Activated naive CD4-positive, alpha-beta T cell treated with anti-CD3 and anti-CD28 coated beads for 36 hours (primary cell): ENCODE measurements at regions of chr9 and their contacts with region 1.

Region 1: DNA sequence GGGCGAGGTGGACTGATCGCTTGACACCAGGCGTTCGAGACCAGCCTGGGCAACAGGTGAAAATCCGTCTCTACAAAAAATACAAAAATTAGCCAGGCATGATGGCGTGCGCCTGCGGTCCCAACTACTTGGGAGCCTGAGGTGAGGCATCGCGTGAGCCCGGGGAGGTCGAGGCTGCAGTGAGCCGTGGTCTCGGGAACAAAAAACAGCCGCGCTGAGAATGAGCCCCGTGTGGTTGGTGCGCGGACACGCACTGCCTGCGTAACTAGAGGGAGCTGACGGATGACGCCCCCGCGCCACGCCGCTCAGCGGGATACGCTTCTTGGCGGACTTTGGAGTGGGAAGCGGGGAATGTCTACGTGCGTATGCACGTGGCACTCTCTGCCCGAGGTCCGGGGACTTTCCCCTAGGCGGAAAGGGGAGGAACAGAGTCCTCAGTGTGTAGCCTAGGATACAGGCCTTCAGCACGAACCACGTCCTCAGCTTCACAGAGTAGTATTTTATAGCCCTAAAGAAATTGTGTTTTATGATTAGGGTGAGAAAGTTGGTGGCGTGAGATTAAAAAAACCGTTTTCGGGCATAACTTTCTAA is at the start of gene RMRP:
- DNase-seq: peak; percentile 93
- H3K4me3 Mint-ChIP-seq: peak within 1 kb of the TSS; percentile 84
- H3K27ac Mint-ChIP-seq: peak within 1 kb of the TSS; percentile 94
- H3K4me1 Mint-ChIP-seq: peaks cover 60% of the 10 kb centered on the region
- H3K27me3 Mint-ChIP-seq: peaks cover 3% of the 10 kb centered on the region
- total RNA-seq, gene RMRP: 7,381 to 12,571 TPM

Region 2: GRCh38 chr9:34376596-34377403 is 1280.8 kb before region 1 on chr9 and contains the start of gene MYORG:
- CTCF ChIA-PET with region 1: no interaction called
- intact Hi-C with region 1: no loop called
- DNase-seq: peak; percentile 97
- H3K4me3 Mint-ChIP-seq: peak within 1 kb of the TSS; percentile 80
- H3K27ac Mint-ChIP-seq: no peak within 1 kb of the TSS
- H3K4me1 Mint-ChIP-seq: peaks cover 30% of the 10 kb centered on the region
- H3K27me3 Mint-ChIP-seq: no peaks in the 10 kb centered on the region
- total RNA-seq, gene MYORG: 1.1 to 2.0 TPM

Region 3: GRCh38 chr9:34759432-34760134 is 898.1 kb before region 1 on chr9:
- CTCF ChIA-PET with region 1: no interaction called
- intact Hi-C with region 1: no loop called
- DNase-seq: no peak
- H3K4me3 Mint-ChIP-seq: no peak overlapping the region
- H3K27ac Mint-ChIP-seq: no peak overlapping the region
- H3K4me1 Mint-ChIP-seq: peaks cover 2% of the 10 kb centered on the region
- H3K27me3 Mint-ChIP-seq: peaks cover 32% of the 10 kb centered on the region

Region 4: DNA sequence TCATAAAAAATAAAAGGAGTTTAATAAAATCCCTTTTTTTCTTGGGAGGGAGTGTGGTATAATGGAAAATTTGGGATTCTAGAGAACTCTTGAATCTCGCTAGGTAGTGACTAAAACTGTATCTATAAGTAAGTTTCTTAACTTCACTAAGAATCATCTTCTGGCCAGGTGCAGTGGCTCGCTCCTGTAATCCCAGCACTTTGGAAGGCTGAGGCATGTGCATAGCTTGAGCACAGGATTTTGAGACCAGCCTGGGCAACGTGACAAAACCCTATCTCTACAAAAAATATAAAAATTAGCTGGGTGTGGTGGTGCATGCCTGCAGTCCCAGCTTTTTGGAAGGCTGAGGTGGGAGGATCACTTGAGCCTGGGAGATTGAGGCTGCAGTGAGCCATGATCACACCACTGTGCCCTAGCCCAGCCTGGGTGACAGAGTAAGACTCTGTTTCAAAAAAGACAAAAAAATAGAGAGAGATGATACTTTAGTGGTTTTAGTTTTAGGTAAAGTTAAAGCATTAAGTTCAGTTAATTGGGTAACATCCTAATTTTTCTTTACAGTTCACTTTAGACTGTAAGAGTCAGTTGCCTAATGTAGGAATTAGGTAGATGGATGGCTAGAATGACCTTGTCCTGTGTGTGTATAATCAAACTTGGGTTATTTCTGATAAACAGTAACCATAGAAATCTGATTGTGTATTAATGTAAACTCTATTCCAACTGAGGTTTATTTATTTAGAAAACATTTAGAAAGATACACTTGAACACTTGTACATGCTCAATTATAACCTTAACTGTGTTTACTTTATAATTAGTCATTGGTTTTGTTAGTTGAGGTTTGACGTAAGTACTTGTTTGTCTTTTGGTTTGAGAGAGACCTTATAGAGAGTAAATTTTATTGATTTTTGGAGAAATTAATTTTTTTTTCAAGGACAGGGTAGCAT is 478.0 kb before region 1 on chr9:
- CTCF ChIA-PET with region 1: no interaction called
- intact Hi-C with region 1: no loop called
- DNase-seq: no peak
- H3K4me3 Mint-ChIP-seq: no peak overlapping the region
- H3K27ac Mint-ChIP-seq: no peak overlapping the region
- H3K4me1 Mint-ChIP-seq: no peaks in the 10 kb centered on the region
- H3K27me3 Mint-ChIP-seq: no peaks in the 10 kb centered on the region

Region 5: DNA sequence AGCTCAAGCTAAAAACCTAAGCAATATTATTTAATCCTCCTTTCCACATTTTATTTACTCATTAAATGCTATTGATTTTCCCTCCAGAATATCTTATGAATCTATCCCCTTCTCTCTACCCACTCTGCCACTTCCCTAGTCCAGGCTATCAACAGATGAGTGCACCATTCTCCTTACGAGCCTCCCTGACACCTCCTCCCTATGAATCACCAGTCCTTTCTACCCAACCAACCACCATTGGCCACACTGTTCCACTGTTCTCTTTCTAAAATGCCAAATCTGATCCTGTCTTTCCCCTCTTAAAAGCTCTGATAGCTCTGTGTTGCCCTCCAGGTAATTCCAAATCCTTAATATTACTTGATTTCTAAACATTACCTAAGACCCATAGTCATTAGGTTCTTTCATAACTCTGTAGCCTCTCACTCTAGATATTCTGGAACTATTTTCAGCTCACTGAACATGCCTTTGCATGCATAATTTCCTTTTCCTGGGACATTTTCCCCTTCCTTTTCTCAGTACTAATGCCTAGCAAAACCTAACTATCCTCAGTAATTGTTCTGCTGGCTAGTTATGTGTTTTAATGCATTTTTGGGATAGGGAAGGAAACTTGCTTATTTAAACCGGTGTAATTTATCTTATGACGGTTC is 369.5 kb before region 1 on chr9:
- CTCF ChIA-PET with region 1: no interaction called
- intact Hi-C with region 1: no loop called
- DNase-seq: no peak
- H3K4me3 Mint-ChIP-seq: no peak overlapping the region
- H3K27ac Mint-ChIP-seq: no peak overlapping the region
- H3K4me1 Mint-ChIP-seq: no peaks in the 10 kb centered on the region
- H3K27me3 Mint-ChIP-seq: peaks cover 4% of the 10 kb centered on the region

Region 6: GRCh38 chr9:35690431-35691333 is 33.0 kb after region 1 on chr9:
- CTCF ChIA-PET with region 1: interaction called, 45 read pairs
- intact Hi-C with region 1: loop called (anchors 1 kb)
- DNase-seq: peak; percentile 43
- H3K4me3 Mint-ChIP-seq: peak overlapping the region; percentile 78
- H3K27ac Mint-ChIP-seq: no peak overlapping the region
- H3K4me1 Mint-ChIP-seq: peaks cover 18% of the 10 kb centered on the region
- H3K27me3 Mint-ChIP-seq: no peaks in the 10 kb centered on the region

Region 7: GRCh38 chr9:35748858-35749514 is 91.3 kb after region 1 on chr9 and contains the starts of genes GBA2 and RGP1:
- CTCF ChIA-PET with region 1: interaction called, 5 read pairs
- intact Hi-C with region 1: loop called (anchors 1 kb)
- DNase-seq: peak; percentile 67
- H3K4me3 Mint-ChIP-seq: peak within 1 kb of the TSS; percentile 89
- H3K27ac Mint-ChIP-seq: peak within 1 kb of the TSS; percentile 88
- H3K4me1 Mint-ChIP-seq: peaks cover 32% of the 10 kb centered on the region
- H3K27me3 Mint-ChIP-seq: no peaks in the 10 kb centered on the region
- total RNA-seq, gene GBA2: 20.3 to 22.7 TPM
- total RNA-seq, gene RGP1: 12.0 to 13.3 TPM